ENCODE measurements at regions of chr5 and their contacts with region 1.

Region 1: GRCh38 chr5:172412724-172413286 is 41.5 kb downstream of the SH3PXD2B start:
- DNase-seq: peak; percentile 65
- H3K4me3 Mint-ChIP-seq: peak overlapping the region; percentile 63
- H3K27ac Mint-ChIP-seq: peak overlapping the region; percentile 80
- H3K4me1 Mint-ChIP-seq: peaks cover 29% of the 10 kb centered on the region
- H3K27me3 Mint-ChIP-seq: peaks cover 8% of the 10 kb centered on the region

Region 2: GRCh38 chr5:171521219-171521633 is 891.6 kb before region 1 on chr5:
- intact Hi-C with region 1: no loop called
- DNase-seq: no peak
- H3K4me3 Mint-ChIP-seq: no peak overlapping the region
- H3K27ac Mint-ChIP-seq: no peak overlapping the region
- H3K4me1 Mint-ChIP-seq: no peaks in the 10 kb centered on the region
- H3K27me3 Mint-ChIP-seq: no peaks in the 10 kb centered on the region

Region 3: DNA sequence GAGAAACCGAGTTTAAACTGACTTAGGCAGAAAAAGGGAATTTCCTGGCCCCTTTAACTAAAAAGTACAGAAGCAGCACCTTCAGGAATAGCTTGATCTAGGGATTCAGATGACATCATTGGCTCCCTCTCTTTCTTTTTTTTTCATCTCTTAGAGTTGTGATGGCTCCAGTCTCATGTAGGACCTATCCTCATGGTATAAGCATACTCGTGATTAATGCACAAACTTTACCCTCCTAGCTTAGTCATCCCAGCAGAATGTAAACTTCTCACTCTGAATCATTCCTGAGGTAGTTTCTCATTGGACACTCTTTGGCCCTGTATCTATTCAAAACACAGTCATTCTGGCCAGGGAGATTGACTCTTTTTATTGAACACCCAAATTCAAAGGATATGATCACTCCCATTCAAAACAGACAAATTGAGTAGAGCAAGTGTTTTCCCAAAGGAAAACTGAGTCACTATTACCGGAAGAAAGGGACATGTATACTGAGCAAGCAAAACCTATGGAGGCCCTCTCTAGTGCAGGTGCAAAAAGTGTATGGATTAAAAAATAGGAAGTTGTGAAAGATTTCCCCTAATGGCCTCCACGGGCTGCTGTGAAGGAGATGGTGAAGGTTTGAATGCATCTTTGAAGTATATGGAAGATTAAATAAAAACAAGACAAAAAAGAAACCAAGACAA is 654.8 kb before region 1 on chr5:
- intact Hi-C with region 1: no loop called
- DNase-seq: no peak
- H3K4me3 Mint-ChIP-seq: no peak overlapping the region
- H3K27ac Mint-ChIP-seq: no peak overlapping the region
- H3K4me1 Mint-ChIP-seq: no peaks in the 10 kb centered on the region
- H3K27me3 Mint-ChIP-seq: peaks cover 4% of the 10 kb centered on the region

Region 4: DNA sequence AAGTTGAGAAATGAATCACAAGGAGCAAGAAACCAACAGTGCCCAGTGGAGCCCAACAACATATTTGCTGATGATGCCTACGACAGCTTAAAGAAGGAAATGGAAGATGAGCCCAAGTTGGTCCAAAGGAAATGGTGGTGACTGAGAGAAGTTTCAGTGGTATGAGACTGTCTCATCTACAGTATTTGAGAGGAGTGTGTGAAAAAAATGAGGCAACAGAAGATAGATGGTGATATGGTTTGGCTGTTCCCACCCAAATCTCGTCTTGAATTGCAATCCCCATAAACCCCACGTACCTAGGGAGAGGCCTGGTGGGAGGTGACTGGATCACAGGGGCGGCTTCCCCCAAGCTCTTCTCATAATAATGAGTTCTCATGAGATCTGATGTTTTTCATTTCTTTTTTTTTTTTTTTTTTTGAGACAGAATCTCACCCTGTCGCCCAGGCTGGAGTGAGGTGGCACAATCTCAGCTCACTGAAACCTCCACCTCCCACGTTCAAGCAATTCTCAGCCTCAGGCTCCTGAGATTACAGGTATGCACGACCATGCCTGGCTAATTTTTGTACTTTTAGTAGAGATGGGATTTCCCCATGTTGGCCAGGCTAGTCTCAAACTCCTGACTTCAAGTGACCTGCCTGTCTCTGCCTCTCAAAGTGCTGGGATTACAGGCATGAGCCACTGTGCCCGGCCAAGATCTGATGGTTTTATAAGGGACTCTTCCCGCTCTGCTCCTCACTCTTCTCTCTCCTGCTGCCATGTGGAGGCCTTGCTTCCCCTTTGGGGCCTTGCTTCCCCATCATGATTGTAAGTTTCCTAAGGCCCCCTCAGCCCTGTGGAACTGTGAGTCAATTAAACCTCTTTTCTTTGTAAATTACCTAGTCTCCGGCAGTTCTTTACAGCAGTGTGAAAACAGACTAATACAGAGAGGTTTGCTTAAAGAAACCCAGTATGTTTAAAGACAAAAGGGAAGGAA is 188.6 kb before region 1 on chr5:
- intact Hi-C with region 1: loop called (anchors 5 kb)
- DNase-seq: peak; percentile 69
- H3K4me3 Mint-ChIP-seq: peak overlapping the region; percentile 17
- H3K27ac Mint-ChIP-seq: peak overlapping the region; percentile 73
- H3K4me1 Mint-ChIP-seq: peaks cover 22% of the 10 kb centered on the region
- H3K27me3 Mint-ChIP-seq: peaks cover 7% of the 10 kb centered on the region

Region 5: DNA sequence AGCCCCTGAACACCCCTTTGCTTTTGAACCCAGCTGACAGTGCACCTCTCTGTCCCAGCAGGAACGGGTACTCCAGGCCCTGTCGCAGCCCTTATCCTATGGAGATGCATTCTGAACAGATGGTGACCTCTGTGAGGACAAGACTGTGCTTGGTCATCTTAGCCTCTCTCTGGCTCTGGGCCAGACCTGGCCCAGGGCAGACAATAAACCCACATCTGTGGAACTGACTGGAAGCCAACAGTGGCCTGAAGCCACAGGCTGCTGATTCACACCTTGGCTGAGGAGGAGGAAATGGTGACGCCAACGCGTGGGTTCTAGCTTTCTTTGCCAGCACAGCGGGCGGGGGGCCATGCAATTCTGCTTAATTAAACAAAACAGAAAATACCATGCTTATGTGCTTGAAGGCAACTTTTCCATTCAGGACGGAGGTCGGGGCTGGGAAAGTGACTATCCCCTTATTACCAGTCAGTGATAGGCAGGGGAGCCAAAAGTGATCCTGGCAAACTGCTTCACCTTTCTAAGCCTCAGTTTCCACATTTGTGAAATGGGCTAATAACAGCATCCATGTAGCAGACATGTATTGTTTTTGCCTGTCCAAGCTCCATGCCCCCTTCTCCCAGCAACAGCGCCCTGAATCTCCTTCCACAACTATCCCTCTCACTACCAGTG is 30.8 kb after region 1 on chr5:
- intact Hi-C with region 1: loop called (anchors 1 kb)
- DNase-seq: peak; percentile 73
- H3K4me3 Mint-ChIP-seq: peak overlapping the region; percentile 18
- H3K27ac Mint-ChIP-seq: no peak overlapping the region
- H3K4me1 Mint-ChIP-seq: peaks cover 11% of the 10 kb centered on the region
- H3K27me3 Mint-ChIP-seq: peaks cover 23% of the 10 kb centered on the region

Region 6: GRCh38 chr5:172479044-172479783 is 66.4 kb after region 1 on chr5:
- intact Hi-C with region 1: no loop called
- DNase-seq: peak; percentile 85
- H3K4me3 Mint-ChIP-seq: no peak overlapping the region
- H3K27ac Mint-ChIP-seq: no peak overlapping the region
- H3K4me1 Mint-ChIP-seq: no peaks in the 10 kb centered on the region
- H3K27me3 Mint-ChIP-seq: no peaks in the 10 kb centered on the region

Measured in activated CD4-positive, alpha-beta T cell treated with anti-CD3 and anti-CD28 coated beads, Interleukin-2, amount 10 ng/mL, durations not matched to agents 24 days and 14 days (primary cell).